Calu3 (cell line): ENCODE measurements at regions of chr10 and their contacts with region 1.

Region 1: GRCh38 chr10:72605122-72605521 is 20.8 kb downstream of the MICU1 start:
- DNase-seq: no peak
- H3K4me3 Mint-ChIP-seq: no peak overlapping the region
- H3K27ac Mint-ChIP-seq: no peak overlapping the region
- H3K4me1 Mint-ChIP-seq: peaks cover 13% of the 10 kb centered on the region
- H3K27me3 Mint-ChIP-seq: no peaks in the 10 kb centered on the region
- CTCF ChIP-seq: no peak

Region 2: DNA sequence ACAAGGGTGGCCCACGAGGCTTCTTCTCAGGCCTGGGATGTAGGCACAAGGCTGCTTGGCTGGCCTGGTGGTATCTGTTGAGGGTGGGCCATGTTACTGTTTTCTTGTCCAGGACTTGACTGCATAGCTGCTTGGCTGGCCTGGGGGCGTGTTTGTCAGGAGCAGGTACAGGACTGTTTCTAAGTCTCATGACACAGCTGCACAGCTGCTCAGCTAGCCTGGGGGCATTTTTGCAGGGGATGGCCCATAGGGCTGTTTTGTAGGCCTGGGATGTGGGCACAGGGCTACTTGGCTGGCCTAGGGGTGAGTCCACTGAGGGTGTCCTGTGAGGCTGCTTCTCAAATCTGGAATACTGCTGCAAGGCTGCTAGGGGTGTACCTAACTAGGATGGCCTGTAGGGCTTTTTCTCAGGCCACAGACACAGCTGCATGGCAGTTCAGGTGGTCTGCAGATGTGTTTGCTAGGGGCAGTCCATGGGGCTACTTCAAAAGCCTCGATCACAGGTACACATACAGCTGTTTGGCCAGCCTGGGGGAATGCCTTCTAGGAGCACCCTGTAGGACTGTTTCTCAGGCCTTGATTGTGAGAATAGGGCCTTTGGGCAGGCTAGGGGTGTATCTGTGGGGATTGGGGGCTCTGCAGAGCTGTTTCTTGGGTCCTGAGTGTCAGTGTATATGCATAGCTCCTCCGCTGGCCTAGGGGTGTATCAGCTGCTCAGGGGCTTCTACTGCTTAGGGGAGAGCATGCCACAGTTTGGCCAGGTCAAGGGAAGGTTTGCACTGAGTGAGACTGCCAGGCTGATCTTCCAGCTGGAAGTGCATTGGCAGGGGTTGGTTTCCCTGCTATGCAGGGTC is 376.1 kb after region 1 on chr10:
- CTCF ChIA-PET with region 1: interaction called, 10 read pairs
- intact Hi-C with region 1: no loop called
- DNase-seq: no peak
- H3K4me3 Mint-ChIP-seq: no peak overlapping the region
- H3K27ac Mint-ChIP-seq: no peak overlapping the region
- H3K4me1 Mint-ChIP-seq: no peaks in the 10 kb centered on the region
- H3K27me3 Mint-ChIP-seq: no peaks in the 10 kb centered on the region
- CTCF ChIP-seq: no peak